ENCODE measurements at regions of chr11 and their contacts with region 1.

Region 1: DNA sequence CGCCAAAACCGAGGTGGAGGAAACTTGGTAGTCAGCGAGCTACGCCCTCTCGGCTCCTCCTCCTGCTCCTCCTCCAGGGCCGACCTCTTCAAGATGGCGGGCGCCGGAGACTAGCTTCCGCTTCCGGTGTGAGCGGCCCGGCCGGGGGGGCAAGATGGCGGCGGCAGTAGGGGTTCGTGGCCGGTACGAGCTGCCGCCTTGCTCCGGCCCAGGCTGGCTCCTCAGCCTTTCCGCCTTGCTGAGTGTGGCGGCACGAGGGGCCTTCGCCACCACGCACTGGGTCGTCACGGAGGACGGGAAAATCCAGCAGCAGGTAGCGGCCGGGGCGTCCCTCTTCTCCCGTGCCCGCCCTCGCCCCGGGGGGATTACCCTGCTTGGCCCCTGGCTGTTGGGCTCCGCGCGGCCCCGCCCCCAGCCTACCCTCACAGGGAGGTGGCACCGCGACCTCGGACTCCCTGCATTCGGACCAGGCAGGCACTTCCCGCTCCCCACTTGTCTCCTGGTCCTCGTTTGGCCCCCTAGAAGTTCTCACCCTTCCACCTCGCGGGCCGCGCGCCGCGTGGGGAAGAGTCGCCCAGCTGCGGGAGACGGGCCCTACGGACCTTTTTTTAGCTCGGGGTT is at the start of gene TTC17:
- DNase-seq: peak; percentile 93
- ATAC-seq: peak; percentile 90
- H3K4me3 Mint-ChIP-seq: peak within 1 kb of the TSS; percentile 99
- H3K27ac Mint-ChIP-seq: peak within 1 kb of the TSS; percentile 99
- H3K4me1 Mint-ChIP-seq: peaks cover 38% of the 10 kb centered on the region
- H3K27me3 Mint-ChIP-seq: no peaks in the 10 kb centered on the region
- CTCF ChIP-seq: no peak
- total RNA-seq, gene TTC17: 102 and 127 TPM in 2 replicates

Region 2: DNA sequence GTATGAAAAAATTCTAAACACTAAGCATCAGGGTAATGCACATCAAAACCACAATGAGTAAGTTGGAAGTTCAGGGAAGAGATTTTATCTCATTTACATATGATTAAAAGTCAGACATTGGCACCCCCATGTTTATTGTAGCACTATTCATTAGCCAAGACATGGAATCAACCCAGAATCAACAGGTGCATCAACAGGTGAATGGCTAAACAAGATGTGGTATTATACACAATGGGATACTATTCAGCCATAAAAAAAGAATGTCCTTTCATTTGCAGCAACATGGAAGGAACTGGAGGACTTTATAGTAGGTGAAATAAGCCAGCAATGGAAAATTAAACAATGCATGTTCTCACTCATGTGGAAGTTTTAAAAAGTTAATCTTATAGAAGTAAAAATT is 17.8 kb before region 1 on chr11:
- CTCF ChIA-PET with region 1: no interaction called
- POLR2A ChIA-PET with region 1: no interaction called
- intact Hi-C with region 1: loop called (anchors 2 kb)
- DNase-seq: no peak
- ATAC-seq: no peak
- H3K4me3 Mint-ChIP-seq: no peak overlapping the region
- H3K27ac Mint-ChIP-seq: no peak overlapping the region
- H3K4me1 Mint-ChIP-seq: no peaks in the 10 kb centered on the region
- H3K27me3 Mint-ChIP-seq: no peaks in the 10 kb centered on the region
- CTCF ChIP-seq: no peak

Region 3: GRCh38 chr11:43410394-43410793 is 51.5 kb after region 1 on chr11:
- CTCF ChIA-PET with region 1: no interaction called
- POLR2A ChIA-PET with region 1: no interaction called
- intact Hi-C with region 1: no loop called
- DNase-seq: no peak
- ATAC-seq: no peak
- H3K4me3 Mint-ChIP-seq: no peak overlapping the region
- H3K27ac Mint-ChIP-seq: no peak overlapping the region
- H3K4me1 Mint-ChIP-seq: no peaks in the 10 kb centered on the region
- H3K27me3 Mint-ChIP-seq: no peaks in the 10 kb centered on the region
- CTCF ChIP-seq: no peak

Region 4: GRCh38 chr11:43643898-43644620 is 285.1 kb after region 1 on chr11:
- CTCF ChIA-PET with region 1: no interaction called
- POLR2A ChIA-PET with region 1: no interaction called
- intact Hi-C with region 1: loop called (anchors 2 kb)
- DNase-seq: peak; percentile 84
- ATAC-seq: peak; percentile 100
- H3K4me3 Mint-ChIP-seq: peak overlapping the region; percentile 96
- H3K27ac Mint-ChIP-seq: peak overlapping the region; percentile 89
- H3K4me1 Mint-ChIP-seq: peaks cover 14% of the 10 kb centered on the region
- H3K27me3 Mint-ChIP-seq: peaks cover 10% of the 10 kb centered on the region
- CTCF ChIP-seq: no peak

Region 5: DNA sequence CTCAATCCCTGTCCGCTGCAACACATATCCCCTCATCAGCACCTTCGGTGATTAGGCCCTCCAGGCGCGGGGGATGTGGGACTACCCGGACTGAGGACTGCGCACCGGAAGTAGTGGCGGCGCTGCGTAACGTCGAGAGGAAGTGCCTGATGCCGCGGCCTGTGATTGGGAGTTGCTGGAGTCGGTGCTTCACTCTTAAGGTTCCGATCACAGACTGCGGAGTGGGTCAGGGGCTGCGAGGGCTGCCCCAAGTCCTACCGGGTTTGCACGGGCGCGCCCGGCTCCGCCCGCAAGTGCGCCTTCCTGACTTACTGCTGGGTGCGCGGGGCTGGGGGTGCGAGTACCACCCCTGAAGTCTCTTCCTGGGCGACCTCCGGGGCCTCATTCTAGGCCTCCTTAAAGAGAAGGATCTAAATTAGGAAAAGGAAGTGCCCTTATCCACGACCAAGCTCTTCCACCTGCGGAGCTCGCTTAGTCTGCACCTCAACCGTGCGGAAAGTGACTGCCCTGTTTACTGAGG is 521.8 kb after region 1 on chr11 and contains the start of gene ALKBH3:
- CTCF ChIA-PET with region 1: no interaction called
- POLR2A ChIA-PET with region 1: interaction called, 8 read pairs
- intact Hi-C with region 1: loop called (anchors 1 kb)
- DNase-seq: peak; percentile 83
- ATAC-seq: peak; percentile 99
- H3K4me3 Mint-ChIP-seq: peak within 1 kb of the TSS; percentile 94
- H3K27ac Mint-ChIP-seq: peak within 1 kb of the TSS; percentile 74
- H3K4me1 Mint-ChIP-seq: peaks cover 20% of the 10 kb centered on the region
- H3K27me3 Mint-ChIP-seq: peaks cover 32% of the 10 kb centered on the region
- CTCF ChIP-seq: no peak
- total RNA-seq, gene ALKBH3: 28.3 and 40.5 TPM in 2 replicates

Region 6: GRCh38 chr11:45354976-45355705 is 1996.2 kb after region 1 on chr11:
- CTCF ChIA-PET with region 1: no interaction called
- POLR2A ChIA-PET with region 1: no interaction called
- intact Hi-C with region 1: loop called (anchors 2 kb)
- DNase-seq: peak; percentile 77
- ATAC-seq: peak; percentile 95
- H3K4me3 Mint-ChIP-seq: peak overlapping the region; percentile 83
- H3K27ac Mint-ChIP-seq: peak overlapping the region; percentile 73
- H3K4me1 Mint-ChIP-seq: peaks cover 15% of the 10 kb centered on the region
- H3K27me3 Mint-ChIP-seq: peaks cover 5% of the 10 kb centered on the region
- CTCF ChIP-seq: no peak

Measured in activated B cell treated with CpG ODN at 0.5 μM for 24 hours (primary cell).